ENCODE measurements at regions of chr22 and their contacts with region 1.

Region 1: GRCh38 chr22:24402460-24403192 is 24.8 kb upstream of the ADORA2A start:
- DNase-seq: peak; percentile 94
- ATAC-seq: peak; percentile 96
- H3K4me3 ChIP-seq: no peak overlapping the region
- H3K27ac ChIP-seq: peak overlapping the region; percentile 69
- H3K4me1 ChIP-seq: peaks cover 15% of the 10 kb centered on the region
- H3K27me3 ChIP-seq: no peaks in the 10 kb centered on the region
- CTCF ChIP-seq: no peak

Region 2: DNA sequence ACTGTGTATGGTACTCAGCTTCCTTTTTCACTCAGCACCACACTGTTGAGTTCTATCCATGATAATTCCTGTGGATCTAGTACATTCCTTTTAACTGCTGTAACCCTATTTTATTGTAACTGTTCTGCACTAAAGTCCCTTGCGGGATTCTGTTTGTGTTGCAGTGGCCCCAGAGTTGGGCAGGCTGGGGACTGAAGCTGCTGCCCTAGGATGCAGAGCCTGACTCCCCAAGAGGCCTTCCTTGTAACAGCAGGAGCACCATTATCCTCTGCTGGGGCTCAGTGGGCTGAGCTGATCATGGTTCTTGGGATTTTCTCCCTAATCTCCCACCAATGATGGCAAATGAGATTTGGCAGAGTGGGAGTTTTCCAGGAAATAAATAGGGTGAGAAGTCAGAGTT is 313.8 kb before region 1 on chr22:
- CTCF ChIA-PET with region 1: no interaction called
- POLR2A ChIA-PET with region 1: no interaction called
- intact Hi-C with region 1: no loop called
- DNase-seq: no peak
- ATAC-seq: no peak
- H3K4me3 ChIP-seq: no peak overlapping the region
- H3K27ac ChIP-seq: no peak overlapping the region
- H3K4me1 ChIP-seq: no peaks in the 10 kb centered on the region
- H3K27me3 ChIP-seq: no peaks in the 10 kb centered on the region
- CTCF ChIP-seq: no peak

Region 3: GRCh38 chr22:24338726-24339451 is 63.7 kb before region 1 on chr22:
- CTCF ChIA-PET with region 1: no interaction called
- POLR2A ChIA-PET with region 1: no interaction called
- intact Hi-C with region 1: loop called (anchors 10 kb)
- DNase-seq: no peak
- ATAC-seq: no peak
- H3K4me3 ChIP-seq: no peak overlapping the region
- H3K27ac ChIP-seq: no peak overlapping the region
- H3K4me1 ChIP-seq: no peaks in the 10 kb centered on the region
- H3K27me3 ChIP-seq: no peaks in the 10 kb centered on the region
- CTCF ChIP-seq: no peak

Region 4: DNA sequence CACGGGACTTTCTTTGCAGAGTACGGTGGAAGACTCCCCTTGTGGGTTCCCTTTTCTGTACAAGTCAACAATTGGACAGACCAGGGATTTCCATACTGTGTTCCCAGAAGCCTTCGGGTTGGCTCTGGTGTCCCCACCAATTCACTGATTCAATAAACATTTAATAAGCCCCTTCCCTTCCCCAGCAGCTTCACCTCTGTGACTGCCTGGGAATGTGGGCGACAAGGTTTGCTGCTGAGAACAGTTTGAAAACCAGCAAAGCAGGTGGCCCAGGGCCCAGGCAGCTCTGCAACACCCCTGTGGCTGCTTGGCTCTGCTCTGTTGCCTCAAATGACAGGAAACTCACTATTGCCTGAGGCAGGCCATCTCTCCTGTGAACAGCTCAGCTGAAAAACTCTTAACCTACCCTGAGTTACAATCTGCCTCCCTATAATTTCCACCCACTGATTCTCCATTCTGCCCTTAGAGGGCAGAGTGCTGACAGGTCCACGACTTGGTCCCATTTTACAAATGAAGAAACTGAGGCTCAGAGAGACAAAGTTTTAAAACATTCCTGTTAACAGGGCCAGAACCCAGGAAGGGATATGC is 35.2 kb after region 1 on chr22:
- CTCF ChIA-PET with region 1: no interaction called
- POLR2A ChIA-PET with region 1: no interaction called
- intact Hi-C with region 1: no loop called
- DNase-seq: peak; percentile 63
- ATAC-seq: peak; percentile 51
- H3K4me3 ChIP-seq: no peak overlapping the region
- H3K27ac ChIP-seq: no peak overlapping the region
- H3K4me1 ChIP-seq: peaks cover 3% of the 10 kb centered on the region; the same call in 1 of the 2 replicates
- H3K27me3 ChIP-seq: no peaks in the 10 kb centered on the region
- CTCF ChIP-seq: peak; percentile 46; the same call in 1 of the 2 replicates

Region 5: GRCh38 chr22:24466716-24467328 is 64.2 kb after region 1 on chr22:
- CTCF ChIA-PET with region 1: no interaction called
- POLR2A ChIA-PET with region 1: no interaction called
- intact Hi-C with region 1: no loop called
- DNase-seq: peak; percentile 3
- ATAC-seq: no peak
- H3K4me3 ChIP-seq: no peak overlapping the region
- H3K27ac ChIP-seq: no peak overlapping the region
- H3K4me1 ChIP-seq: no peaks in the 10 kb centered on the region
- H3K27me3 ChIP-seq: no peaks in the 10 kb centered on the region
- CTCF ChIP-seq: no peak

Region 6: GRCh38 chr22:24601217-24602104 is 198.8 kb after region 1 on chr22:
- CTCF ChIA-PET with region 1: no interaction called
- POLR2A ChIA-PET with region 1: no interaction called
- intact Hi-C with region 1: no loop called
- DNase-seq: no peak
- ATAC-seq: no peak
- H3K4me3 ChIP-seq: no peak overlapping the region
- H3K27ac ChIP-seq: no peak overlapping the region
- H3K4me1 ChIP-seq: no peaks in the 10 kb centered on the region
- H3K27me3 ChIP-seq: no peaks in the 10 kb centered on the region
- CTCF ChIP-seq: no peak